ENCODE measurements at regions of chr15 and their contacts with region 1.

Region 1: GRCh38 chr15:82749951-82750830 is 40.5 kb upstream of the AP3B2 start:
- DNase-seq: peak; percentile 93
- H3K4me3 Mint-ChIP-seq: peak overlapping the region; percentile 95
- H3K27ac Mint-ChIP-seq: peak overlapping the region; percentile 92
- H3K4me1 Mint-ChIP-seq: peaks cover 24% of the 10 kb centered on the region
- H3K27me3 Mint-ChIP-seq: no peaks in the 10 kb centered on the region
- CTCF ChIP-seq: no peak

Region 2: DNA sequence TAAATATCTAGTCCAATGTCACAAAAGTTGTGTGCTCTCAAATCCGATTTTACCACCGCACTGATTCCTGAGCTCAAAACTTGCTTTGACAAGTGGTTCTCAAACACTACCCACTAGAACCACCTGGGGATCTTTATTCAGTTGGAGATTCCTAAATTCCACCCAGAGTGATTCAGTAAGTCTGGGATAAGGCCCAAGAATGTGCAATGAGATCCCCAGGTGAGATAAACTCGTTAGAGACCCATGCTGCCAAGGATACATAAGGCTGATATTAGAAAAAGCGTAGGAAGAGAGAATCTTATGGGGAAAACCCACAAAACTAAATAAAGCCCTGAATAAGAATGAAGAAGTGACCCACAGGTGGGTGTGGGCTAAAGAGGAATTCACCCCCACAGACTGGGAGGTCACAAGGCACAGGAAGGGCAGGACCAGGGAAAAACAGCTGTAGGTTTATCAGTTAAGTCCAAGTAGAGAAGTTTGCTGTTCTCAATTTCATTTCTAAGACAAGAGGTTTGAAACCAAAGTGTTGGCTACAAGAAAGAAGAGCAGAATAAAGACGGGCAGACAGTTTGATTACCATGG is 198.4 kb before region 1 on chr15:
- CTCF ChIA-PET with region 1: interaction called, 4 read pairs
- POLR2A ChIA-PET with region 1: interaction called, 11 read pairs
- intact Hi-C with region 1: no loop called
- DNase-seq: peak; percentile 39
- H3K4me3 Mint-ChIP-seq: no peak overlapping the region
- H3K27ac Mint-ChIP-seq: no peak overlapping the region
- H3K4me1 Mint-ChIP-seq: peaks cover 21% of the 10 kb centered on the region
- H3K27me3 Mint-ChIP-seq: no peaks in the 10 kb centered on the region
- CTCF ChIP-seq: no peak

Region 3: GRCh38 chr15:82709421-82710207 is 40.6 kb before region 1 on chr15 and contains the start of gene AP3B2:
- CTCF ChIA-PET with region 1: interaction called, 6 read pairs
- POLR2A ChIA-PET with region 1: interaction called, 35 read pairs
- intact Hi-C with region 1: no loop called
- DNase-seq: peak; percentile 71
- H3K4me3 Mint-ChIP-seq: no peak within 1 kb of the TSS
- H3K27ac Mint-ChIP-seq: no peak within 1 kb of the TSS
- H3K4me1 Mint-ChIP-seq: no peaks in the 10 kb centered on the region
- H3K27me3 Mint-ChIP-seq: no peaks in the 10 kb centered on the region
- CTCF ChIP-seq: no peak
- total RNA-seq, gene AP3B2: 6.1 and 7.5 TPM in 2 replicates

Region 4: DNA sequence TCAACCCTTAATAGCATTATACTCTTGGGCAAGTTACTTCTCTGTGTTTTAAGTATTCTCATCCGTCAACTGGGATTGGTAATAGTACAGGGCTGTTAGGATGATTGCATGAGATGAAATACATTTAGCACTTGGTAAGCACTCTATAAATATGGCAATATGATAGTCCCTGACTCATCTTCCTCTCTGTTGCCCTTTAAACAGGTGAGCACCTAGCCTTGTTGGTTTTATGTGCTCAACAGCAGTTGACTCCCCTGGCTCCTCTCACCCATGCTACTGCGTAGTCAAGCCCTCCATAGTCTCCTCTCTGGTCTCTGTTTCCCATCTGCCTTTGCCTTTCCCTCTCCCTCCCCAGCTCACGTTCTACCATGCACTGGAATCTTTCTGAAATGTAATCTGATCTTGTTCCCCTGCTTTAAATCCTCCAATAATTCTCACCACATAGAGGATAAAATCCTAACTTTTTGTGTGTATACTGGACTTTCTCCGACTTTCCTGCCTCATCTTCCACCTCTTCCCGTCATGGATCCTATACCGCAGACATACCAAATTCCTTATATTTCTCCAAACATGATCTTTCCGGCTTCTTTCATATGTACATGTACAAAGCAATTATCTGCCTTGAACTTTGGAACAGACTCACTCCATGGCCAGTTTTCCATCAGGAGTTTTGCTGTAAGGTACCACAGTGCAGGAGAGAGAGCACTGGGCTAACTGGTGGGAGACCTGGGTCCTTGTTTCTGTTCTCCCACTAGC is 13.3 kb after region 1 on chr15:
- CTCF ChIA-PET with region 1: interaction called, 4 read pairs
- POLR2A ChIA-PET with region 1: interaction called, 20 read pairs
- intact Hi-C with region 1: no loop called
- DNase-seq: no peak
- H3K4me3 Mint-ChIP-seq: no peak overlapping the region
- H3K27ac Mint-ChIP-seq: no peak overlapping the region
- H3K4me1 Mint-ChIP-seq: peaks cover 5% of the 10 kb centered on the region
- H3K27me3 Mint-ChIP-seq: no peaks in the 10 kb centered on the region
- CTCF ChIP-seq: no peak

Region 5: GRCh38 chr15:82803793-82804574 is 53.8 kb after region 1 on chr15:
- CTCF ChIA-PET with region 1: interaction called, 7 read pairs
- POLR2A ChIA-PET with region 1: interaction called, 182 read pairs
- intact Hi-C with region 1: loop called (anchors 2 kb)
- DNase-seq: no peak
- H3K4me3 Mint-ChIP-seq: no peak overlapping the region
- H3K27ac Mint-ChIP-seq: no peak overlapping the region
- H3K4me1 Mint-ChIP-seq: peaks cover 6% of the 10 kb centered on the region
- H3K27me3 Mint-ChIP-seq: peaks cover 25% of the 10 kb centered on the region
- CTCF ChIP-seq: no peak

Region 6: GRCh38 chr15:82985688-82986441 is 235.7 kb after region 1 on chr15 and contains the start of gene RAMAC:
- CTCF ChIA-PET with region 1: no interaction called
- POLR2A ChIA-PET with region 1: interaction called, 29 read pairs
- intact Hi-C with region 1: loop called (anchors 5 kb)
- DNase-seq: peak; percentile 96
- H3K4me3 Mint-ChIP-seq: peak within 1 kb of the TSS; percentile 98
- H3K27ac Mint-ChIP-seq: peak within 1 kb of the TSS; percentile 72
- H3K4me1 Mint-ChIP-seq: peaks cover 4% of the 10 kb centered on the region
- H3K27me3 Mint-ChIP-seq: no peaks in the 10 kb centered on the region
- CTCF ChIP-seq: no peak
- total RNA-seq, gene RAMAC: 21.0 and 25.6 TPM in 2 replicates

Region 7: DNA sequence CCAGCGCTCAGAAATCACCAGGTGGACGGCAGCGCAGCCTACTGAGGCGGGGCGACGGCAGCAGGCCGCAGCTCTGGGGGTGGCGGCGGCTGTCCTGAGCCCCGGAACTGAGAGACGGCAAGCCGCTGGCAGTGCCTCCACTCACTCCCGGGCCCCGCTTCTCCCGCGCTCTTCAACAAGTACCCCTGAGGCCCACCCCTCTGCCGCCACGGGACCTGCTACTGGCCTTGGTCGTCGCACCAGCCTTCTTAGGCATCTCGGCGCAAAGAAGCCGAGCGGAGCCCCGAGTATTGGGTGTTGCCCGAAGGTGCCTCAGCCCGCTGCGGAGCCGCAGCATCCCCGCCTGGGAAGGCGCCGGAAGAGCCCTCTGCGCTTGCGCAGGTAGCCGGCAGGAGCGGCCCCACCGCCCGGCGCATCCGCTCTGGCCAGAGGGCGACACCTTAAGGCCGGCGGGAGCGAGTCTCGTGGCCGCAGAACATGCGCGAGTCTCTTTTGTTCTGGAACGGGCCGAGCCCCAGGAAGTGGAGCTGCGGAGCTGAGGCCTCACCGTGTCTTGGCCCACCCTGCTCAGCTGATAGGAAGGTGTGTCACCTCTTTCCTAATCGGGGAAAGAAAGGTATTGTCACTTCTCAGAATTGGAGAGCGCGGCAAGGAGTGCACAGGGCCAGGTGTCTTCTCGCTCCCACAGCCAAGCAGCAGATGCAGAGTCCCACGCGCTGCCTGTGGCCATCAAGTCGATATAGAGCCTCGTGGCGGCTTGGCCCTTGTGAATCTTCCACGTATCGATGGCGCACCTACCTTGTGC is 261.3 kb after region 1 on chr15 and contains the start of gene C15orf40:
- CTCF ChIA-PET with region 1: interaction called, 3 read pairs
- POLR2A ChIA-PET with region 1: interaction called, 17 read pairs
- intact Hi-C with region 1: no loop called
- DNase-seq: peak; percentile 89
- H3K4me3 Mint-ChIP-seq: peak within 1 kb of the TSS; percentile 82
- H3K27ac Mint-ChIP-seq: peak within 1 kb of the TSS; percentile 82
- H3K4me1 Mint-ChIP-seq: peaks cover 24% of the 10 kb centered on the region
- H3K27me3 Mint-ChIP-seq: no peaks in the 10 kb centered on the region
- CTCF ChIP-seq: peak; percentile 37
- total RNA-seq, gene C15orf40: 38.1 and 39.3 TPM in 2 replicates

Region 8: DNA sequence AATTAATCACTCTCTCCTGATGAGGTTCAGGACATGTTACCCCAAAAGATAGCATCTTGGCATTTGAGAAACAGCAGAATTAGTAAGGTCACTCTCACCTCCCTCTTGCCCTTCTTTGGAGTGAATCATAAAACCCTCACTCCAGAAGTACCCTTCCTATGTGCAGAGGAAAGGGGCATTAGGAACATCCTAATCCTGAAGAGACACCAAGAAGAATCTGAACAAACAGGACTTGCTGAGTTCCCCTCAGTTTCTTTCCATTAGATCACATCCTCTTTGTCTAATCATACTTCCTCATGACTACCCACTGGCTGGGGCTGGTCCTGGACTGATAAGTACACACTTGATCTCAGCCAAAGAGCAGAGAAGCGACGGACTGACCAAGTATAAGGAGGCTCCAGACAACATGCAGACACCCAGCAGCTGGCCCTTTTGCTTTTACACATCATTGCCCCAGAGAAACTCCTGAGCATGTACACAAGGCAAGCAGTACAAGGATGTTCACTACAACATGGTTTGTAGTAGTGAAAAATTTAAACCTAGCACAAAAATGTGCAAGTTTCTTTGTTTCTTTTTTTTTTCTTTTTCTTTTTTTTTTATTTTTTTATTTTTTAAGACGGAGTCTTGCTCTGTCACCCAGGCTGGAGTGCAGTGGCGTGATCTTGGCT is 342.3 kb after region 1 on chr15:
- CTCF ChIA-PET with region 1: no interaction called
- POLR2A ChIA-PET with region 1: no interaction called
- intact Hi-C with region 1: no loop called
- DNase-seq: no peak
- H3K4me3 Mint-ChIP-seq: no peak overlapping the region
- H3K27ac Mint-ChIP-seq: no peak overlapping the region
- H3K4me1 Mint-ChIP-seq: no peaks in the 10 kb centered on the region
- H3K27me3 Mint-ChIP-seq: peaks cover 14% of the 10 kb centered on the region
- CTCF ChIP-seq: no peak

Measured in MCF 10A (cell line).